Dendritic cell treated with granulocyte-macrophage colony-stimulating factor and Interleukin-4, amounts not matched to agents 40 ng/mL and 50 ng/mL, for 4 days (primary cell): ENCODE measurements at regions of chr17 and their contacts with region 1.

Region 1: DNA sequence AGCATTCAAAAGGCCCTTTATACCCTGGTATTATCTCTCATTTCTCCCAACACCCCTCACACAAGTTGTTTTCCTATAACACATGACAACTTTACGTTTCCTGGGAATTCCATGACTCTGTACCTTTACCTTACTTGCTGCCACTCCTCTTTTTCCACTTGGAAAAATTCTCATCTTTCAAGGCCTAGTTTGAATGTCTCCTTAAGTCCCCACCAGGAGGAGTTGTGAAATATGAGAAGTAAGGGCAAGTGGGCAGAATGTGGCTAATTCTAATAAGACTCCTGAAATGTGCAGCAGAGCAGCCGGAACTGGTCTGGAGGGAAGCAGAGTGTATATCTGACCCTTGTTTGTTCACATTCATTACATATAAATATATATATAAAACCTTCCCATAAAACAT is 39.7 kb downstream of the BRCA1 start:
- H3K4me3 Mint-ChIP-seq: no peak overlapping the region
- H3K27ac Mint-ChIP-seq: no peak overlapping the region
- H3K4me1 Mint-ChIP-seq: no peaks in the 10 kb centered on the region
- H3K27me3 Mint-ChIP-seq: no peaks in the 10 kb centered on the region

Region 2: DNA sequence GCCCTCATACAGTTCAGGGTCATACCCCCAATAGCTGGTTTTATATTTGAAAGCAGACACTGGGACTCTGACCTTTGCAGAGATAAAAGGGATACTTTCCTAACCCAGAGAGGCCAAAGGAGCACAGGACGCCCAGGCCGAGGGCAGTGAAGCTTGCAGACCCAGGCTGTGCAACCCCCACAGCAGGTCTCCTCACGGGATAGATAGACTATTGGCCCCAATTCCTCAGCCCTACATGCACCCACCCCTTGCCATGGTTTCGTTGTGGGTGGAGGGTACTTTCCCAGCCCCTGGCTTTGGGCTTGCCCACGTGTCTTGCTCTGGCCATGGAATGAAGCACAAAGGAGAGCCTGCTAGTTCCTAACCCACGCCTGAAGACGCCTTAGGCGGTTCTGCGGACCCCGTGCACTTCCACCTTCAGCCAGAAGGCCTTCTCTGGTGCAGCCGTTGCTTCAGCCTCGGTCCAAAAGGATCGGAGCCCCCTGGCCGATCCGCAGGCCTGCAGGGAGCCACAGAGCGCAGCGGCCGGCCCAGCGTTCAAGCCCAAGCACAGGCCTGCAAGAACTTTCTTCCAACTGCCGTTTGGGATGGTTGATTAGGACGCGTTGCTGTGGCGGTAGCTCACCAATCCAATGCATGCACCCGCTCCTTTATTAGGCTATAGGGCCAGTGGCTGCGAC is 49.4 kb after region 1 on chr17:
- intact Hi-C with region 1: loop called (anchors 10 kb)
- H3K4me3 Mint-ChIP-seq: no peak overlapping the region
- H3K27ac Mint-ChIP-seq: no peak overlapping the region
- H3K4me1 Mint-ChIP-seq: peaks cover 38% of the 10 kb centered on the region
- H3K27me3 Mint-ChIP-seq: no peaks in the 10 kb centered on the region

Region 3: GRCh38 chr17:43200127-43200526 is 114.7 kb after region 1 on chr17:
- intact Hi-C with region 1: no loop called
- H3K4me3 Mint-ChIP-seq: no peak overlapping the region
- H3K27ac Mint-ChIP-seq: no peak overlapping the region
- H3K4me1 Mint-ChIP-seq: no peaks in the 10 kb centered on the region
- H3K27me3 Mint-ChIP-seq: no peaks in the 10 kb centered on the region